IMR-90 (cell line): ENCODE measurements at regions of chr6 and their contacts with region 1.

Region 1: GRCh38 chr6:125779924-125780539 is 10.7 kb upstream of the NCOA7 start:
- DNase-seq: peak; percentile 92
- ATAC-seq: peak; percentile 89
- H3K4me3 ChIP-seq: peak overlapping the region; percentile 59
- H3K27ac ChIP-seq: no peak overlapping the region
- H3K4me1 ChIP-seq: no peaks in the 10 kb centered on the region
- H3K27me3 ChIP-seq: peaks cover 5% of the 10 kb centered on the region; the same call in 1 of the 2 replicates
- CTCF ChIP-seq: peak; percentile 28; the same call in 1 of the 2 replicates
- POLR2A ChIP-seq: peak; percentile 58; the same call in 1 of the 2 replicates
- RAD21 ChIP-seq: no peak

Region 2: DNA sequence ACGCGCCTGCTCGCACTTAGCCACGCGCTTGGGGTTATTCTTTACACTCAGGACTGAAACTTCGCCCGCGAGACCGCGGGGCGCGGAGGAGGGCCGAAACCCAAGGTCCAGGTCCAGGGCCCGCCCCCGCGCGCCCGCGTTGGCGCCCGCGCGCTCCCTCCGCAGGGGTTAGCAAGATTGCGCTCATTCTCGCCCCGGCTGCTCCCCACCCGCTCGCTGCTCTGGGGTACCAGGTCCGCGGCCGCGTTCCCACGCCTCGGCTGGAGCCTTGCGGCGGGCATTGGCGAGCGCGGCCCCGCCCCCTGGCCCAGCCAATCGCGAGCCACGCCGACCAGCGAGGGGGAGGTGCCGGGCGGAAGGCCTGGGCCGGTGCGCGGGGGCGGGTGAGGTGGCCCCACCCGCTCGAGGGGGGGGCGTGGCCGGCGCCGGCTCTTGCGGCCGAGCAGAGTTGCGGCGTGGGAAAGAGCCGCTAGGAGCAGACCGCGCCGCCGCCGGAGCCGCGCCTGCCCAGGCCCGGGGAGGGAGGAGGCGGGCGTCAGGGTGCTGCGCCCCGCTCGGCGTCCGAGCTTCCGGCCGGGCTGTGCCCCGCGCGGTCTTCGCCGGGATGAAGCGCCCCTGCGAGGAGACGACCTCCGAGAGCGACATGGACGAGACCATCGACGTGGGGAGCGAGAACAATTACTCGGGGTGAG is 30.7 kb before region 1 on chr6 and contains the start of gene HEY2:
- CTCF ChIA-PET with region 1: no interaction called
- POLR2A ChIA-PET with region 1: interaction called, 12 read pairs
- dilution Hi-C with region 1: no loop called
- in situ Hi-C with region 1: no loop called
- intact Hi-C with region 1: no loop called
- DNase-seq: peak; percentile 81
- ATAC-seq: peak; percentile 99
- H3K4me3 ChIP-seq: peak within 1 kb of the TSS; percentile 60
- H3K27ac ChIP-seq: no peak within 1 kb of the TSS
- H3K4me1 ChIP-seq: peaks cover 10% of the 10 kb centered on the region
- H3K27me3 ChIP-seq: peaks cover 64% of the 10 kb centered on the region
- CTCF ChIP-seq: no peak
- POLR2A ChIP-seq: no peak
- RAD21 ChIP-seq: no peak
- total RNA-seq, gene HEY2: not detected in 2 replicates

Region 3: GRCh38 chr6:125790358-125791150 is 10.5 kb after region 1 on chr6 and contains the start of gene NCOA7:
- CTCF ChIA-PET with region 1: interaction called, 18 read pairs
- POLR2A ChIA-PET with region 1: interaction called, 3 read pairs
- dilution Hi-C with region 1: no loop called
- in situ Hi-C with region 1: no loop called
- intact Hi-C with region 1: no loop called
- DNase-seq: peak; percentile 67
- ATAC-seq: peak; percentile 94
- H3K4me3 ChIP-seq: peak within 1 kb of the TSS; percentile 83
- H3K27ac ChIP-seq: peak within 1 kb of the TSS; percentile 82
- H3K4me1 ChIP-seq: peaks cover 8% of the 10 kb centered on the region
- H3K27me3 ChIP-seq: no peaks in the 10 kb centered on the region
- CTCF ChIP-seq: 0 out of 2 replicates have a peak, but pooled peaks have one; percentile 14
- POLR2A ChIP-seq: peak; percentile 28
- RAD21 ChIP-seq: no peak
- total RNA-seq, gene NCOA7: 12.9 and 17.2 TPM in 2 replicates

Region 4: GRCh38 chr6:125974214-125974866 is 194.3 kb after region 1 on chr6:
- CTCF ChIA-PET with region 1: no interaction called
- POLR2A ChIA-PET with region 1: no interaction called
- dilution Hi-C with region 1: no loop called
- in situ Hi-C with region 1: no loop called
- intact Hi-C with region 1: loop called (anchors 2 kb)
- DNase-seq: peak; percentile 68
- ATAC-seq: peak; percentile 72
- H3K4me3 ChIP-seq: no peak overlapping the region
- H3K27ac ChIP-seq: no peak overlapping the region
- H3K4me1 ChIP-seq: no peaks in the 10 kb centered on the region
- H3K27me3 ChIP-seq: no peaks in the 10 kb centered on the region
- CTCF ChIP-seq: peak; percentile 65
- POLR2A ChIP-seq: no peak
- RAD21 ChIP-seq: peak; percentile 62

Region 5: GRCh38 chr6:126461055-126461454 is 681.0 kb after region 1 on chr6:
- CTCF ChIA-PET with region 1: no interaction called
- POLR2A ChIA-PET with region 1: no interaction called
- dilution Hi-C with region 1: no loop called
- in situ Hi-C with region 1: no loop called
- intact Hi-C with region 1: no loop called
- DNase-seq: no peak
- ATAC-seq: no peak
- H3K4me3 ChIP-seq: no peak overlapping the region
- H3K27ac ChIP-seq: no peak overlapping the region
- H3K4me1 ChIP-seq: no peaks in the 10 kb centered on the region
- H3K27me3 ChIP-seq: no peaks in the 10 kb centered on the region
- CTCF ChIP-seq: no peak
- POLR2A ChIP-seq: no peak
- RAD21 ChIP-seq: no peak